Right cardiac atrium (tissue), 5 donors: ENCODE measurements at regions of chr15 and their contacts with region 1.

Region 1: GRCh38 chr15:79640206-79640605 is 208.1 kb downstream of the MINAR1 start:
- DNase-seq: peak in 1 of 3 donors; percentile 26
- ATAC-seq: peak; percentile 76 to 86
- H3K4me3 ChIP-seq: no peak overlapping the region
- H3K27ac ChIP-seq: no peak overlapping the region
- H3K4me1 ChIP-seq: no peaks in the 10 kb centered on the region
- H3K27me3 ChIP-seq: no peaks in the 10 kb centered on the region

Region 2: DNA sequence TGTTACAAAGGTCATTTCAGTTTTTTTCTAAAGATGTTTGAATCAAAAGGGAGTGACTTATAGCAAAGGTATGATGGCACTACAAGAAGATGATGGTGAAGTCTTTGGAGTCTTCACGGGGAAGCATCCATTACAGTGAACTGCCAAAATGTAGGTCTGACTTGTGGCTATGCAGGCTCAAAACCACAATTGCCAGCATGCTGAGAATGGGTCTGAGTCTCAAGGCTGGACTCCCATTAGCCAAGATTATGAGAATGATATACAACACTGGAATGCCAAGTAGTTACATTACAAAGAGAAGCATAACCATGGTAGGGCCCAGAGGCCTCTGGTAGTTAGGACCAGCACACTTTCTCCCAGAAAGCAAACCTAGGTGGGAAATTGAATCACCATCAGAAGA is 62.4 kb after region 1 on chr15:
- intact Hi-C with region 1: loop called in 1 of 4 experiments (anchors 10 kb)
- DNase-seq: no peak
- ATAC-seq: no peak
- H3K4me3 ChIP-seq: no peak overlapping the region
- H3K27ac ChIP-seq: no peak overlapping the region
- H3K4me1 ChIP-seq: no peaks in the 10 kb centered on the region
- H3K27me3 ChIP-seq: no peaks in the 10 kb centered on the region

Region 3: DNA sequence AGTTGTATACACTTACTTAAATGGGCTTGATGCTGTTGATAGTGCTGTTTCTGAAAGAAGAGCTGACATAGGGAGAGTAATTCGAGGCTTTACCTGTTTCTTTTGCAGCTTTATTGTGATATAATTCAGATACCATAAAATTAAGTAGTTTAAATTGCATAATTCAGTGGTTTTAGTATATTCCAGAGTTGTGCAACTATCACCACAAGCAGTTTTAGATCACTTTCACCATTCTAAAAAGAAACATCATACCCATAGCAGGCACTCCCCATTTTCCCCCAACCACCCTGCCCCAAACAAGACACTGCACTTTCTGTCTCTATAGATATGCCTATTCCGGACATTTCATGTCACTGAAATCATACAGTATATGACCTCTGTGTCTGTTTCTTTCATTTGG is 158.1 kb after region 1 on chr15:
- intact Hi-C with region 1: no loop called
- DNase-seq: no peak
- ATAC-seq: no peak
- H3K4me3 ChIP-seq: no peak overlapping the region
- H3K27ac ChIP-seq: no peak overlapping the region
- H3K4me1 ChIP-seq: no peaks in the 10 kb centered on the region
- H3K27me3 ChIP-seq: no peaks in the 10 kb centered on the region